ENCODE measurements at regions of chr15 and their contacts with region 1.

Region 1: DNA sequence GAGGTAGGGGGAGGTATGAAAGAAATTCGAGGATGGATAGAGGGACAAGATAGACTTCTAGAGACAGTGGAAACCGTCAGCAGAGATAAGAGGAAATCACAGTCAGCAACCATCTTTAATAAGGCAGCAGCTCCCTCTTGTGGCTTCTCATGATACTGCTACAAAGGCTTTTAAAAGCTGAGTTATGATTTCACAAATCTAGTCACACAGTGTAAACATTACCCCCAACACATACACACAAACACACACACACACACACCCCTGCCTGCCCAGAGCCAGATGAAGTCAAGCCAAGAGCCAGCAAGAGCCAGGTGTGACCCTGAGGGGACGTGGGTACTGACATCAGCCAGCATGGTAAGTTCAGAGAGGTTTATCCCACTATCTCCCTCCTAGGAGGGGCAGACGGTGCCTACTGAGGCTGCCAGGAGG is 18.9 kb upstream of the TGM5 start:
- DNase-seq: no peak
- H3K4me3 ChIP-seq: no peak overlapping the region
- H3K27ac ChIP-seq: no peak overlapping the region
- H3K4me1 ChIP-seq: no peaks in the 10 kb centered on the region
- H3K27me3 ChIP-seq: no peaks in the 10 kb centered on the region
- CTCF ChIP-seq: peak; percentile 78 to 84 (median 81)

Region 2: GRCh38 chr15:43225201-43225949 is 60.2 kb before region 1 on chr15:
- intact Hi-C with region 1: loop called (anchors 1 kb)
- DNase-seq: no peak
- H3K4me3 ChIP-seq: no peak overlapping the region
- H3K27ac ChIP-seq: no peak overlapping the region
- H3K4me1 ChIP-seq: no peaks in the 10 kb centered on the region
- H3K27me3 ChIP-seq: no peaks in the 10 kb centered on the region
- CTCF ChIP-seq: peak; percentile 61 to 78 (median 68)

Region 3: DNA sequence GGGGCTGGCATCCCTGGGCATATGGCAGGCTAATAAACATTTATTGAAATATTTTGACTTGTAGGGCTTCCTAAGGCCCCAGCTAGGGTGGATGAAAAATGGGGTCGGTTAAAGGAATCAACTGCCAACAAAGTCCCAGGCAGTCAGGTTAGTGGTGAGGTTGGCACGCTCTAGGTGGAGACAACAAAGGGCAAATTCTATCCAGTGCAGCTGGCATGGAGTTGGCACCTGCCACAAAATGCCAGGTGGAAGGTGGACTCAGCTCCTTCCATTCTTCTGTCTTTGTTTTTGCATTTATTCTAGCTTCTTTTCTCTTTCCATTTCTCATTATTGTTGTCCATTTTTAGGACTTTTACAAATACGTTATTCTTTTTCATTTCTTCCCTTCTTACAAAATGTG is 13.8 kb after region 1 on chr15:
- intact Hi-C with region 1: no loop called
- DNase-seq: no peak
- H3K4me3 ChIP-seq: no peak overlapping the region
- H3K27ac ChIP-seq: no peak overlapping the region
- H3K4me1 ChIP-seq: no peaks in the 10 kb centered on the region
- H3K27me3 ChIP-seq: no peaks in the 10 kb centered on the region
- CTCF ChIP-seq: no peak